Activated naive CD4-positive, alpha-beta T cell treated with anti-CD3 and anti-CD28 coated beads for 36 hours (primary cell): ENCODE measurements at regions of chrX and their contacts with region 1.

Region 1: DNA sequence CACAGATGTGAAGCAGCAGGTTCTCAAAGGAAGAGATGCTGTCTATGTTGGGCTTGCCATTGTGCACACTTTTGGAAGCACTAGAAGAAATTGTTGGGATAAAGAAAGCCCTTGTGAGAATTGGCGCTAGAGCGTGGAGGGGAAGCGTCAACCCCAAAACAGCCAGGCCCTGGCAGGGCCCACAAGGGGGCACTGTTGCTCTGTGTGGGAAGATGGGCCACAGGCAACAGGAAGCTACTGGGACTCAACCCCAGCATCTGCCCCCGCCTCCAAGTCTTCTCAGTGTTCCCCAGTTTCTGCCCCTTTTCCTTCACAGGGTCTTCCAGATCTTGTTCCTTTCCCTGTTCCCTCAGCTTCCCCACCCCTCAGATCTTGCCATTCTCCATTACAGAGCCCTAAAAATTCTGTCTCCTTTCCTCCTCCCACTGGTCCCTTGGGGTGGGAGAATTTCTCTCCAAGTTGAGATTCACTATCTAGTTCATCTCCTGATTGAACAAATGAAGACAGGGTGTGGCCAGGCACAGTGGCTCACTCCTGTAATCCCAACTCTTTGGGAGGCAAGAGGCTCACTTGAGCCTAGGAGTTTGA is 85.5 kb downstream of the STARD8 start:
- DNase-seq: peak; percentile 75
- H3K4me3 Mint-ChIP-seq: no peak overlapping the region
- H3K27ac Mint-ChIP-seq: no peak overlapping the region
- H3K4me1 Mint-ChIP-seq: no peaks in the 10 kb centered on the region
- H3K27me3 Mint-ChIP-seq: peaks cover 10% of the 10 kb centered on the region

Region 2: GRCh38 chrX:68807818-68808217 is 74.8 kb after region 1 on chrX:
- CTCF ChIA-PET with region 1: interaction called, 5 read pairs
- intact Hi-C with region 1: loop called (anchors 1 kb)
- DNase-seq: peak; percentile 27
- H3K4me3 Mint-ChIP-seq: no peak overlapping the region
- H3K27ac Mint-ChIP-seq: no peak overlapping the region
- H3K4me1 Mint-ChIP-seq: no peaks in the 10 kb centered on the region
- H3K27me3 Mint-ChIP-seq: peaks cover 6% of the 10 kb centered on the region

Region 3: DNA sequence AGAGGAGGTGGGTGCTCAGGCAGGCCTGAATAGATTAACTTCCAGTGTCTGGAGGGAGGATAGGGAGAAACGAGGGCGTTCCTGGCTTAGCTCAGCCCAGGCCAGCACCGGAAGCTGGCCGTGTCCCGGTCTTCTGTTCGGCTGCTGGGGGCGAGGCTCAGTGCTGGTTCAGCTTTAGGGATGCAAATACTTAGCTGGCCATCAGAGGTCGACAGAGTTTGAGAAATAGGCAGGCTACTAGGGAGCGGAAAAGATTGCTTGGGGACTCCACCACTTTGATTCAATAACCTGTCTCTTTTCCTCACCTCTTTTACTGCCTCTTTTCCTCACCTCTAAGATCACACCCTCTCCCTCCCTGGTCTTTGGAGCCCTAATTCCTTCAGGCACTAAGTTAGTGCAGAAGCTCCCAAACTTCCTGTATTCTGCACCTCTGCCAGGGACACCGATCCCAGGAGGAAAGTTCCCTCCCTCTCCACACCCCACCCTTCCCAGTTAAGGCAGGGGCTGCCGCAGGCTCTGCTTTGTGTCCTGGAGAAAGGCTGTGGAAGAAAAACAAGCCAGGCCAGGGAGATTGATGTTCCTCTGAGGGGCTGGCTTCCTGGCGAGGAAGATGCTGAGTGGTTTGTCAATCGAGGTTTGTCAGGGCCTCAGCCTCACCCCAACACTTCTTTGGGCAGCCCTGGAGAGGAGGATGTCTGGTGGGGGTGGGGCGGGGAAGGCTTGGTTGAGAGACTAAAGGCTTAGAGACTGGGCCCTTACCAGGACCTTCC is 89.8 kb after region 1 on chrX:
- CTCF ChIA-PET with region 1: interaction called, 3 read pairs
- intact Hi-C with region 1: loop called (anchors 2 kb)
- DNase-seq: peak; percentile 30
- H3K4me3 Mint-ChIP-seq: no peak overlapping the region
- H3K27ac Mint-ChIP-seq: no peak overlapping the region
- H3K4me1 Mint-ChIP-seq: peaks cover 5% of the 10 kb centered on the region
- H3K27me3 Mint-ChIP-seq: peaks cover 1% of the 10 kb centered on the region

Region 4: DNA sequence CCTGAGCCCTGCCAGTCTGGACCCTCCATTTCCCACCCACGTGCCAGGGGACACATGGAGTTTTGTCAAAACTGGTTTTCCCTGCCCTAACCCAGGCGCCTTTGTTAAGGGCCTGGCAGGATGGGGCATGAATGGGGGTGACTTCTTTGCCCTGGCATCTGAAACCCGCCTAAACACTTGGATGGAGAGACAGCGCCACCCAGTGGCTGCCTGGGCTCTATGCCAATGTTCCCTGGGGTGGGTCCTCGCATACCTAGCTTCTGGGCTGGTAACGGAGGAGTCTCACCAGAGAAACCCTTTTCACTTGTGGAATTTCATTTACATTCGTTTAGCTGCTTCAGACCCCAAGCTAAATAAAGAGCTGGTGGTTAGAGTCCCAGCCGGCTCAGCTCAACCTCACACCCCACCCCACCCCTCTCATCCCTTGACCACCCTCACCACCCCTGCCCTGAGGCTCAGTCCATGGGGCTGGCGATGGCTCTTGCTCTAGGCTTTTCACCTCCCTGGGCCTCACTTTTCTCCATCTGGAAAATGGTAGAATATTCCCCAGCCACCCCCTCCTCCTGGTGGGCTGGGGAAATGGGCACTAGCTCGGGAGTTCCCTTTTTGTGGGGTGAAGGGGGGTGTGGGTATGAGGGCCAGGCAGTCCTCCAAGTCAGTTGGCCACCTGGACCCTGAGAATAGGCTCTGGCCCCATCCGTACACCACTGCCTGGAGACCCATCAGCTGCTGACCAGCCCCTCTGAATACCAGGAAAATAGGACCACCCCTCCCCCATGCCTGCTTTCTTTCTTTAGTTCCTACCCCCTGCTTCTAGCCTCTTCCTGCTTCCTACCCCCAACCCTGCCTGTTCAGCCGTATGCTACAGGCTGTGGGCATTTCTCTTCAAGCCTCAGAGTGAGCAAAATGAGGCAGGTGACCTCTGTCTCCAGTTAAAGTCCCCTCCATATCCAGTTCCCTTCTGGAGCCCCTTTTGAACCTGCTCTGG is 489.4 kb after region 1 on chrX:
- CTCF ChIA-PET with region 1: no interaction called
- intact Hi-C with region 1: loop called (anchors 1 kb)
- DNase-seq: peak; percentile 80
- H3K4me3 Mint-ChIP-seq: no peak overlapping the region
- H3K27ac Mint-ChIP-seq: no peak overlapping the region
- H3K4me1 Mint-ChIP-seq: no peaks in the 10 kb centered on the region
- H3K27me3 Mint-ChIP-seq: no peaks in the 10 kb centered on the region

Region 5: GRCh38 chrX:69285881-69286564 is 553.0 kb after region 1 on chrX:
- CTCF ChIA-PET with region 1: interaction called, 3 read pairs
- intact Hi-C with region 1: loop called (anchors 1 kb)
- DNase-seq: peak; percentile 60
- H3K4me3 Mint-ChIP-seq: no peak overlapping the region
- H3K27ac Mint-ChIP-seq: no peak overlapping the region
- H3K4me1 Mint-ChIP-seq: no peaks in the 10 kb centered on the region
- H3K27me3 Mint-ChIP-seq: no peaks in the 10 kb centered on the region

Region 6: GRCh38 chrX:69387567-69388487 is 654.8 kb after region 1 on chrX:
- CTCF ChIA-PET with region 1: no interaction called
- intact Hi-C with region 1: loop called (anchors 2 kb)
- DNase-seq: peak; percentile 39
- H3K4me3 Mint-ChIP-seq: no peak overlapping the region
- H3K27ac Mint-ChIP-seq: no peak overlapping the region
- H3K4me1 Mint-ChIP-seq: no peaks in the 10 kb centered on the region
- H3K27me3 Mint-ChIP-seq: no peaks in the 10 kb centered on the region